Thyroid gland (tissue), 4 donors: ENCODE measurements at regions of chr11 and their contacts with region 1.

Region 1: GRCh38 chr11:123707606-123708205 is 33.8 kb downstream of the ZNF202 start:
- DNase-seq: peak; percentile 53 to 67
- H3K4me3 ChIP-seq: no peak overlapping the region
- H3K27ac ChIP-seq: no peak overlapping the region
- H3K4me1 ChIP-seq: peaks cover 4 to 7% of the 10 kb centered on the region in 2 donors
- H3K27me3 ChIP-seq: no peaks in the 10 kb centered on the region
- CTCF ChIP-seq: peak; percentile 26 to 75 (median 62)
- POLR2A ChIP-seq: no peak

Region 2: DNA sequence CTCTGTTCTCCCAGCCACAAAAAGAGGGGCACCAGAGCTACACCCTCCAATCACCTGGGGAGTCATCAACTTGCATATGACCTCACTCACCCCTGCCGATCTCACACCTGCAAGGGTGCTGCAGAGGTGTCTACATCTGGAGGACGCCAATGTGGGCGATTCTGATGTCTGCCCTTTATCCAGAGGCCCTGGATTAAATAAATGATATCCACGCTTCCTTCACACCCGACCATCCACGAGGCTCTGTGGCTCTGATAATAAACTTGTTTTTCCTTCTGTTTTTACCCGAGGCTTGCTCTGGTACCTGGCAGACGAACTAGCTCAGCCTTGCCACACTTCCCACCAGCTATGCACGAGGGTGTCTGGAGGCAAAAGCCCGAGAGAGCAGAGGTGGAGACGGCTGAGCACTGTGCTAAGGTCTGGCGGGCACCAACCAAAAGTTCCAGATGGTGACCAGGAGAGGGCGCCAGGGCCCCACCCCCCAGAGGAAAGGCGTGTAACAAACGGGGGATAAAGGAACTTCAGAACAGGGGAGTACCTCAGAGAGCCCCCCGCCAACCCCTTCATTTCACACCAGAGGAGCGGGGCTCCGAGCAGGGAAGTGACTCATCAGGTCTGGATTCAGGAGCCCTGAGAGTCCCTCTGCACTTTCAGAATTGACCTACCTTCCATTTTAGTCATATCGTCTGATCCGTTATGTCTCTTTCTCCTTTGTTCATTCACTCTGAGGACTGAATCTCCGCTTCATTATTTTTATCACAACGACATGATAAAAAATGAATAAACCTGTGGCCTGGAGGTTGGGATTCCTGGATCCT is 66.8 kb before region 1 on chr11:
- intact Hi-C with region 1: loop called (anchors 2 kb)
- DNase-seq: peak; percentile 44 to 47
- H3K4me3 ChIP-seq: no peak overlapping the region
- H3K27ac ChIP-seq: no peak overlapping the region
- H3K4me1 ChIP-seq: no peaks in the 10 kb centered on the region
- H3K27me3 ChIP-seq: no peaks in the 10 kb centered on the region
- CTCF ChIP-seq: peak; percentile 29 to 88 (median 76)
- POLR2A ChIP-seq: no peak

Region 3: GRCh38 chr11:123760894-123761293 is 53.2 kb after region 1 on chr11:
- intact Hi-C with region 1: no loop called
- DNase-seq: no peak
- H3K4me3 ChIP-seq: no peak overlapping the region
- H3K27ac ChIP-seq: no peak overlapping the region
- H3K4me1 ChIP-seq: no peaks in the 10 kb centered on the region
- H3K27me3 ChIP-seq: no peaks in the 10 kb centered on the region
- CTCF ChIP-seq: no peak
- POLR2A ChIP-seq: no peak

Region 4: DNA sequence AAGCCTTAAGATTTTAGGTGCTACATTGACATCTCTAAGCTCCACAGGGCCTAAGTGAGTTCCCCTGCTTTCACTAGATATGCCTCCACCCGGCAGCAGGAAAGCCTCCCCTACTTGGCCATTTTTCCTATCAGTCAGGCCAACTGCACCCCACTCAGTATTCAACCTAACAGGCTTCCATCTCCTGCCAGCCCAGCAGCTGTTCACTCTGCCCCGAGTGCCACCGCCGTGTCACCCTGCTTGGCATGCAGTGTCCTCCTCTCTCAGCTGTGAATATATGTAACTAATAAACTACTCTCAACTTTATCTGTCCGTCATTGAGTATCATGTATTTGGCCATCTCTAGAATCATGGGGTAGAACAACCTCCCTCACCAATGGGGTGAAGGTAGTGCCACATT is 107.4 kb after region 1 on chr11:
- intact Hi-C with region 1: no loop called
- DNase-seq: no peak
- H3K4me3 ChIP-seq: no peak overlapping the region
- H3K27ac ChIP-seq: no peak overlapping the region
- H3K4me1 ChIP-seq: no peaks in the 10 kb centered on the region
- H3K27me3 ChIP-seq: no peaks in the 10 kb centered on the region
- CTCF ChIP-seq: no peak
- POLR2A ChIP-seq: no peak